K562 (cell line): ENCODE measurements at regions of chr13 and their contacts with region 1.

Region 1: DNA sequence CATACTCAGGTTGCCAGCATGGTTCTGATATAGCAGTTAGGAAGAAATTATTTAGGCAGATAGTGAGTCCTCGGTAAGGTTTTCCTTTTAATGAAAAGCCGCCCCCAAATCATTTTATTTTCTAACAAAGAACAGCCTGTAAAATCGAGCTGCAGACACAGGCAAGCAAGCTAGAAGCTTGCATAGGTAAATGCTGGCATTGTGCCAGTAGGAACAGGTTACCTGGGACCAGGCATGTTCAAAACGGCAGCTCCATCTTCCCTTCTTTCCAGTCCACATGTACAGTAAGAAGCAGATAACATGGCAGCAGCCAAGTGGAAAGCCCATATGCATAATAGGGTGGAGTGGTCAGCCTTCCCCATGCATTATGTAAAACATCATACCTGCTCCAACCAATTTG is 71.1 kb downstream of the UGGT2 start:
- DNase-seq: peak in 1 of 4 experiments; percentile 8
- ATAC-seq: peak; percentile 23; the same call in 1 of the 3 replicates
- H3K4me3 ChIP-seq: no peak overlapping the region
- H3K27ac ChIP-seq: no peak overlapping the region
- H3K4me1 ChIP-seq: no peaks in the 10 kb centered on the region
- H3K27me3 ChIP-seq: no peaks in the 10 kb centered on the region
- CTCF ChIP-seq: no peak
- EP300 ChIP-seq: no peak
- POLR2A ChIP-seq: no peak
- RAD21 ChIP-seq: no peak

Region 2: DNA sequence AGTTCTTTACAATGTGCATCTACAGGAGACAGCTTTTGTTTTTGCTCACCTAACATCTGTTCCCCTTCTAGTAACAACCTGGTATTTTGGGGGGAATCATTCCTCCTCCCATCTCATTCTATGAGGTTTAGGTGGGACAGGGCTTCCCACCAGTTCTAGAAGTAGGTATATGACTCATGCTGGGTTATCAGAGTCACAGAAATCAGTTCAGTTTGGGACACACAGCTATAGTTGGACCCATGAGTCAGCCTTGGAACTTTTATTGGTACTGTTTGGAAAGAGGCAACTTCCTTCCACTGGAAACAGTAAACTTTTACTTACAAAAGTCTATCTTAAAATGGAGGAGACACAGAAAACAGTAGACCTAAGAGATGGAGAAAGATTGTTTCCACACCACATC is 119.7 kb before region 1 on chr13:
- CTCF ChIA-PET with region 1: no interaction called
- POLR2A ChIA-PET with region 1: no interaction called
- in situ Hi-C with region 1: no loop called
- intact Hi-C with region 1: loop called (anchors 10 kb)
- DNase-seq: no peak
- ATAC-seq: no peak
- H3K4me3 ChIP-seq: no peak overlapping the region
- H3K27ac ChIP-seq: no peak overlapping the region
- H3K4me1 ChIP-seq: peaks cover 4 to 7% of the 10 kb centered on the region in 2 experiments; a peak in 2 of 5 replicates
- H3K27me3 ChIP-seq: no peaks in the 10 kb centered on the region
- CTCF ChIP-seq: no peak
- EP300 ChIP-seq: no peak
- POLR2A ChIP-seq: no peak
- RAD21 ChIP-seq: no peak

Region 3: DNA sequence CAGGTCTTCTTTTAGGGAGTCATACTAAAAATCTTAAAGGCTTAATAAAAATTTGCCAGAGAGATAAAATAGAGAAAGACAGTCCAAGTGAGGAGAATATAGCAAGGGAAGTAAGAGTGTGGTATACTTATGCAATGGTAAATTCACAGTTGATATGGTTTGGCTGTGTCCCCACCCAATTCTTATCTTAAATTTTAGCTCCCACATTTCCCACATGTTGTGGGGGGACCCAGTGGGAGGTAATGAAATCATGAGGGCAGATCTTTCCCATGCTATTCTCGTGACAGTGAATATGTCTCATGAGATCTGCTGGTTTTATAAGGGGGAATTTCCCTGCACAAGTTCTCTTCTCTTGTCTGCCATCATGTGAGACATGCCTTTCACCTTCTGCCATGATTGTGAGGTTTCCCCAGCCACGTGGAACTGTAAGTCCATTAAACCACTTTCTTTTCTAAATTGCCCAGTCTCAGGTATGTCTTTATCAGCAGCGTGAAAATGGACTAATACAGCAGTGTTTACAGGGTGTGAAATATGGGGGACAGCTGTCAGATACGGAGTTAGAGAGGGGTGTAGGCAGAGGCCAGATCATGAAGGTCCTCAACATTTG is 44.3 kb before region 1 on chr13:
- CTCF ChIA-PET with region 1: no interaction called
- POLR2A ChIA-PET with region 1: no interaction called
- in situ Hi-C with region 1: no loop called
- intact Hi-C with region 1: no loop called
- DNase-seq: peak in 1 of 4 experiments; percentile 26
- ATAC-seq: peak; percentile 51
- H3K4me3 ChIP-seq: no peak overlapping the region
- H3K27ac ChIP-seq: no peak overlapping the region; the same call in 2 of the 3 replicates
- H3K4me1 ChIP-seq: no peaks in the 10 kb centered on the region; a peak in 2 of 5 replicates
- H3K27me3 ChIP-seq: no peaks in the 10 kb centered on the region
- CTCF ChIP-seq: no peak
- EP300 ChIP-seq: no peak
- POLR2A ChIP-seq: no peak
- RAD21 ChIP-seq: no peak